ENCODE measurements at regions of chr7 and their contacts with region 1.

Region 1: DNA sequence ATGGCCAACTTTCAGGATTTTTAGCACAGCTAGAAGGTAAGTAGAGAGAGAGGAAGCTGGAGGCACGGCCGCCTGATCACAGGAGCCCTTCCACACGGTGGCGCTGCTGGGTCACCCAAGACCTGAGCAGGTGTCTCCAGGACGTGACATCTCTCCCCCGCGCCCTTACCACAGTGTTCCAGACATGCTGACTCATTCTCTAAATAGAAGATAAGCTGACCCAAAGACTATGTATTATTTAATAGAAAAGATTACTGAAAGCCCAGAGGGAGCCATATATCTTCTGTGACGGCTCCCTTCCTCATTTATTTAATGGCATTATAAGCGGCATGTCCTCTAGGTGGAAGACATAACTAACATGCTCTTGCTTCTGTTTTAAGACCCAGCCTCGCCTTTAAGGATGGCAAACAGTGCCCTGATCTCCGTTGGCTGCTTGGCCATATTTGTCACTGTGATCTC is 26.0 kb upstream of the MALSU1 start:
- DNase-seq: peak; percentile 96
- H3K4me3 Mint-ChIP-seq: peak overlapping the region; percentile 57
- H3K27ac Mint-ChIP-seq: peak overlapping the region; percentile 69
- H3K4me1 Mint-ChIP-seq: peaks cover 18% of the 10 kb centered on the region
- H3K27me3 Mint-ChIP-seq: peaks cover 7% of the 10 kb centered on the region

Region 2: GRCh38 chr7:23298885-23299769 is 26.0 kb after region 1 on chr7 and contains the start of gene MALSU1:
- intact Hi-C with region 1: loop called (anchors 1 kb)
- DNase-seq: peak; percentile 99
- H3K4me3 Mint-ChIP-seq: peak within 1 kb of the TSS; percentile 93
- H3K27ac Mint-ChIP-seq: peak within 1 kb of the TSS; percentile 90
- H3K4me1 Mint-ChIP-seq: peaks cover 28% of the 10 kb centered on the region
- H3K27me3 Mint-ChIP-seq: no peaks in the 10 kb centered on the region
- total RNA-seq, gene MALSU1: 92.8 and 98.8 TPM in 2 replicates

Region 3: GRCh38 chr7:23462846-23463245 is 189.7 kb after region 1 on chr7:
- intact Hi-C with region 1: loop called (anchors 1 kb)
- DNase-seq: peak; percentile 67
- H3K4me3 Mint-ChIP-seq: no peak overlapping the region
- H3K27ac Mint-ChIP-seq: no peak overlapping the region
- H3K4me1 Mint-ChIP-seq: peaks cover 15% of the 10 kb centered on the region
- H3K27me3 Mint-ChIP-seq: peaks cover 67% of the 10 kb centered on the region

Region 4: DNA sequence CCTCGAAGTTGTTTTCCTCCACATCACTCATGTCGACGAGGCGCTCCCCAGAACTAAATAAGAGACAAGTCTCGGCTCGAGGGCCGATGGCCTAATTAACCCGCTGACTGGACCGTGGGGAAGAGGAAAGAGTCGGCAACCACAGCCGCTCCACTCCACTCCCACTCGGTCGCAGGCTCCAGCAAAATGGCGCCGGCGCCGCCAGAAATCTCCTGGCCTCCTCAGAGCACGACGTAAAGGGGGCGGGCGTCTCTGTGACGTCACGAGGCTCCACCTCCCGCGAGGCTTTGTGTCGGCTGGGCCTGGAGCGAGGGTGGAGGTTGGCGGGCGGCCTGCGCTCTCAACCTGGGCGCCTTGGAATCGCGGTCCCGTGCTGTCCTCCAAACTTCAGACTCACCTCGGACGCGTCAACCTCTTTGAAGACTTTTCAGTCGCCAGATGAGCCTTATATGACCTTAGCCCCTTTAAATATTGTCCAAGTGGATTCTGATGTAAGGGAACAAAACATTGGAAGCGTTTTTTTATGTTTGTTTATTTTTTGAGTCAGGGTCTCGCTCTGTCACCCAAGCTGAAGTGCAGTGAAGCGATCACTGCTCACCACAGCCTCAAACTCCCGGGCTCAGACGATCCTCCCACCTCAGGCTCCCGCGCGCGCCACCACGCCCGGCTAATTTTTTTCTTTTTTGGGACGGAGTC is 258.8 kb after region 1 on chr7 and contains the start of gene TRA2A:
- intact Hi-C with region 1: loop called (anchors 5 kb)
- DNase-seq: peak; percentile 99
- H3K4me3 Mint-ChIP-seq: peak within 1 kb of the TSS; percentile 97
- H3K27ac Mint-ChIP-seq: peak within 1 kb of the TSS; percentile 99
- H3K4me1 Mint-ChIP-seq: peaks cover 29% of the 10 kb centered on the region
- H3K27me3 Mint-ChIP-seq: no peaks in the 10 kb centered on the region
- total RNA-seq, gene TRA2A: 96.8 and 103 TPM in 2 replicates

Region 5: GRCh38 chr7:23558303-23558702 is 285.1 kb after region 1 on chr7:
- intact Hi-C with region 1: no loop called
- DNase-seq: no peak
- H3K4me3 Mint-ChIP-seq: no peak overlapping the region
- H3K27ac Mint-ChIP-seq: no peak overlapping the region
- H3K4me1 Mint-ChIP-seq: no peaks in the 10 kb centered on the region
- H3K27me3 Mint-ChIP-seq: peaks cover 36% of the 10 kb centered on the region

Region 6: DNA sequence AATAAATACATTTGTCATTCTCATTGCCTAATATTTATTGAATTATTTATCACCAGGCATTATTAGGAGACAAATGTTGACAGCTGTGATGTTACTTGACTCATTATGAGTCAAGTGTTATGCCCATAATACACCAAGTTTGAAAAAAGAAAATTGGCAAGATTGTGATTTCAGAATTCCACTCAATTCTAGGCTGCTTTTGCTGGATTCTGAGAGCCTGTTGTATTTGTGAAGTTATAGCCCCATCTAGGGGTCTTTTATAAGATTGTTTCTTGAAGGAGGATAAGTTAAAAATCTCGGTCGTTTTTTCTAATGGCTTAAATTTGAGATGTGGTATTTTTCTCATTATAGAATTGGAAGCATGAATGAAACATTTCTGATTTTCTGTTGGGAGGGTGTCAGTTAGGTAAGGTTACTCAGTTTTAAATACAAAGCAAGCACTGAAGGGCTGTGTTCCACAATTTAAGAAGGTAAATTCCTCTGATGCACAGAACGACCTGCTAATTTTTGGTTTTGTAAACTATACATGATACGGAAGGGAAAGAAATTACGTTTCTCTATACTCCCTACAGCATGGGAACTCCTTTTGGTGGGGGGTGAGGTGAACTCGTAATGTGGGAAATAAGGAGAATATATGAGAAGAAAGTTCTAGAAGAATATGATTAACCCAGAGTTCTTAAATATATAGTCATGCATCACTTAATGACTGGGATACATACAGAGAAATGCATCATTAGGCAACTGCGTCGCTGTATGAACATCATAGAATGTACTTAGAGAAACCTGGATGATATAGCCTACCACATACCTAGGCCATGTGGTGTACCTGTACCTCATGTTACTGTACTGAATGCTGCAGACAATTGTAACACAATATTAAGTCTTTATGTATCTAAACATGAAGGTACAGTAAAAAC is 439.5 kb after region 1 on chr7:
- intact Hi-C with region 1: loop called (anchors 5 kb)
- DNase-seq: no peak
- H3K4me3 Mint-ChIP-seq: no peak overlapping the region
- H3K27ac Mint-ChIP-seq: no peak overlapping the region
- H3K4me1 Mint-ChIP-seq: no peaks in the 10 kb centered on the region
- H3K27me3 Mint-ChIP-seq: peaks cover 3% of the 10 kb centered on the region